ENCODE measurements at regions of chr14 and their contacts with region 1.

Region 1: GRCh38 chr14:75522224-75522982 is at the start of gene BATF:
- DNase-seq: peak; percentile 79 to 90 (median 82)
- H3K4me3 ChIP-seq: peak within 1 kb of the TSS; percentile 81 to 90
- H3K4me3 Mint-ChIP-seq: peak within 1 kb of the TSS; percentile 96 to 100 (median 99)
- H3K27ac ChIP-seq: peak within 1 kb of the TSS; percentile 88
- H3K27ac Mint-ChIP-seq: peak within 1 kb of the TSS; percentile 94 to 99 (median 98)
- H3K4me1 ChIP-seq: peaks cover 69% of the 10 kb centered on the region
- H3K4me1 Mint-ChIP-seq: peaks cover 47 to 84% (median 65%) of the 10 kb centered on the region in 4 donors
- H3K27me3 ChIP-seq: no peaks in the 10 kb centered on the region
- H3K27me3 Mint-ChIP-seq: no peaks in the 10 kb centered on the region
- total RNA-seq, gene BATF: 17.1 to 20.6 TPM

Region 2: GRCh38 chr14:75333606-75334548 is 188.5 kb before region 1 on chr14:
- CTCF ChIA-PET with region 1: no interaction called
- POLR2A ChIA-PET with region 1: interaction called, 12 read pairs
- intact Hi-C with region 1: no loop called
- DNase-seq: peak; percentile 71 to 77 (median 73)
- H3K4me3 ChIP-seq: peak overlapping the region; percentile 57 to 64
- H3K4me3 Mint-ChIP-seq: peak overlapping the region; percentile 71 to 91 (median 86)
- H3K27ac ChIP-seq: peak overlapping the region; percentile 58
- H3K27ac Mint-ChIP-seq: peak overlapping the region; percentile 90 to 99 (median 94)
- H3K4me1 ChIP-seq: peaks cover 22% of the 10 kb centered on the region
- H3K4me1 Mint-ChIP-seq: peaks cover 22 to 36% (median 29%) of the 10 kb centered on the region in 4 donors
- H3K27me3 ChIP-seq: no peaks in the 10 kb centered on the region
- H3K27me3 Mint-ChIP-seq: no peaks in the 10 kb centered on the region

Region 3: DNA sequence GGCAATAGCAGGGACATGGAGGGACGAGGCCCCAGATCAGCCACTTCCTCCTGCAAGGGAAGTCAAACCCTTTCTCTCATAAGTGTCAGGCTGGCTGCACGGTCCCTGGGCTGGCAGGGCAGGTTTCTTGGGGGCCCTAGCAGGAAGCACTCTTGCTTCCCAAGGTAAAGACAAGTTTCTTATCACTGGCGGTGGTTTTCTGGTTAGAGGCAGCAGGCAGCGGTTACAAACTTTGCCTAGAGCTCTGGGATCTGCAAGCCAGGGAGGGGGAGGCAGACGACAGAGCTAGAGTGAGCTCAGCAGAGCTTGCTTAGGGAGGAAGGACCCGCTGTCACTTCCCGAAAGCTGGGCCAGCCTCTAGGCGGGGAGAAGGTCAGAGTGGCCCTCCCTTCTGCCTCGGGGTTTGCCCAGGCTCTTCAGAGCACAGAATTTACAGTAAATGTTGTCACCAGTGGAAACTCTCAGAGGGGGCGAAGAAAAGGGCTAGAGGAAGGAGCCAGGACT is 20.2 kb after region 1 on chr14:
- CTCF ChIA-PET with region 1: interaction called, 74 read pairs
- POLR2A ChIA-PET with region 1: interaction called, 292 read pairs
- intact Hi-C with region 1: loop called (anchors 1 kb)
- DNase-seq: peak; percentile 67 to 93 (median 71)
- H3K4me3 ChIP-seq: peak overlapping the region; percentile 34 to 42
- H3K4me3 Mint-ChIP-seq: peak overlapping the region; percentile 66 to 89 (median 82)
- H3K27ac ChIP-seq: peak overlapping the region; percentile 94
- H3K27ac Mint-ChIP-seq: peak overlapping the region; percentile 96 to 99 (median 97)
- H3K4me1 ChIP-seq: peaks cover 71% of the 10 kb centered on the region
- H3K4me1 Mint-ChIP-seq: peaks cover 48 to 79% (median 67%) of the 10 kb centered on the region in 4 donors
- H3K27me3 ChIP-seq: no peaks in the 10 kb centered on the region
- H3K27me3 Mint-ChIP-seq: no peaks in the 10 kb centered on the region